Mammary epithelial cell (primary cell): ENCODE measurements at regions of chr22 and their contacts with region 1.

Region 1: DNA sequence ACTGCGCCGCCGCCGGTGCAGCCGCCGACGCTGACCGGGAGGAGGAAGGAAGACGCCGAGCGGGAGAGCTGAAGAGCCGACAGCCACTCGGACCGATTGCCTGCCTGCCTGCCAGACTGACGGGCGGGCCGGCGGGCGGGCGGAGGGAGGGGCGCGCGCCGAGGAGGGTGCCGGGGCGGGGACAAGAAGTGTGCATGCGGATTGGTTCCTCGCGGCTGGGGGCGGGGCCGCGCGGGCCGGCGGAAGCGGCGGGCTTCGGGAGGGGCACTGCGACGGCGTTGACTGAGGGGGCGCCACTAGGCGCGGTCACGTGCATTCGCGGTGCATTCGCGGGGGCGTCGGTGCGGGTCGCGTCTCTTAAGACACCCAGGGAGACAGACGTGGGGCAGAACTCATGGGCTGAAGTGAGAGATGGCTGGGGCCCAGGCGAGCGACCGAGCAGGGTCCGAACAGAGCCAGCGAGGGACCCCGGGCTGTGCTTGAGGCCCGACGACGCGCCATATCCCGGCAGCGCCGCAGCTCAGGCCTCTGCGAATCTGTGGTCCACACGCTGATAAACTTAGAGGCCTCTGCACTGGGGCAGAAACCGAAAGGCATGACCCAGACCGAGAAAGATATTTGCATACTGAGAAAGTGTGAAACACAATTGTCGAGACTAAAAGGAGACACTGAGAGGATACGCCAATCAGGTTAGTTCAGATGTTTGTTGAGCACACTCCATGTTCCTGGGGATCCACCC is at the start of gene MAPK1:
- DNase-seq: peak; percentile 83
- H3K4me3 ChIP-seq: peak within 1 kb of the TSS; percentile 81 to 99 (median 88)
- H3K27ac ChIP-seq: peak within 1 kb of the TSS; percentile 86
- H3K4me1 ChIP-seq: peaks cover 25% of the 10 kb centered on the region
- H3K27me3 ChIP-seq: no peaks in the 10 kb centered on the region
- CTCF ChIP-seq: peak in 1 of 2 donors; percentile 38
- total RNA-seq, gene MAPK1: 106 to 147 TPM

Region 2: GRCh38 chr22:21791635-21792625 is 75.8 kb before region 1 on chr22:
- CTCF ChIA-PET with region 1: no interaction called
- dilution Hi-C with region 1: no loop called
- in situ Hi-C with region 1: no loop called
- intact Hi-C with region 1: loop called (anchors 5 kb)
- DNase-seq: peak; percentile 53
- H3K4me3 ChIP-seq: no peak overlapping the region
- H3K27ac ChIP-seq: peak overlapping the region; percentile 17
- H3K4me1 ChIP-seq: peaks cover 15% of the 10 kb centered on the region
- H3K27me3 ChIP-seq: no peaks in the 10 kb centered on the region
- CTCF ChIP-seq: no peak

Region 3: DNA sequence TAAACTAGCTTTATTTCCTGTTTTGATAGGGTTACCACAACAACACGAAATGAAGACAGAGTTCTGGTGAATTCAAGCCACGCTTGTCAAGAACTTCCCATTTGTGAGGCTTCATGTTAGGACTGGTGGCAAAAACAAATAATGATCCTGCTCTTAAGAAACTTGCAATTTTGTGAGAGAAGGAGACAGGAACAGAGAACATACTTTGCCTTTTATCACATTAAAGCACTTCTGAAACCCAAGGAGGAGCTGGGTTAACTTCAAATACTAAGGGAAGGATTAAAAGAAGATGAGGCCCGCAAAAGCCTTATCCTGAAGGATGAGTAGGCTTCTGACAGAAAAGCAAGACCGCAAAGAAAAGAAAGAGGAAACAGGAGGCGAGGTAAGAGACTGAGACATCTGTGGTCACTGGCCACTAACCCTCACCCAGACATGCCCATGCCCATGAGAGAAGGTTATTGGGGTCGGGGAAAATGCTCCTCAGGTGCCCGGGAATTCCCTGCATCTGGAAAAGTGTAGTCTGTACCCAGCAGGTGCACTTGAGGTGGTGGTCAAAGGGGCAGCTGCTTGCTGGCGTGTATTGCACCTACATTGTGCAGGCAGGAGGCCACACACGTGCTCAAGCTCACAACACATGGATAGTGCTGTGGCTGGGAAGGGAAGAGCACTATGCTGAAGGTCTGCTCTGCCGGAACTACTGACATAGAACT is 50.8 kb before region 1 on chr22:
- CTCF ChIA-PET with region 1: no interaction called
- dilution Hi-C with region 1: no loop called
- in situ Hi-C with region 1: no loop called
- intact Hi-C with region 1: loop called (anchors 10 kb)
- DNase-seq: peak; percentile 90
- H3K4me3 ChIP-seq: no peak overlapping the region
- H3K27ac ChIP-seq: peak overlapping the region; percentile 84
- H3K4me1 ChIP-seq: peaks cover 16% of the 10 kb centered on the region
- H3K27me3 ChIP-seq: no peaks in the 10 kb centered on the region
- CTCF ChIP-seq: no peak